Endothelial cell of umbilical vein (primary cell): ENCODE measurements at regions of chrX and their contacts with region 1.

Region 1: GRCh38 chrX:15564981-15565579 is 35.7 kb downstream of the ACE2 start:
- DNase-seq: peak; percentile 87
- H3K4me3 ChIP-seq: no peak overlapping the region
- H3K27ac ChIP-seq: peak overlapping the region; percentile 32
- H3K4me1 ChIP-seq: peaks cover 24% of the 10 kb centered on the region
- H3K27me3 ChIP-seq: no peaks in the 10 kb centered on the region
- CTCF ChIP-seq: peak; percentile 51 to 53
- POLR2A ChIP-seq: no peak

Region 2: DNA sequence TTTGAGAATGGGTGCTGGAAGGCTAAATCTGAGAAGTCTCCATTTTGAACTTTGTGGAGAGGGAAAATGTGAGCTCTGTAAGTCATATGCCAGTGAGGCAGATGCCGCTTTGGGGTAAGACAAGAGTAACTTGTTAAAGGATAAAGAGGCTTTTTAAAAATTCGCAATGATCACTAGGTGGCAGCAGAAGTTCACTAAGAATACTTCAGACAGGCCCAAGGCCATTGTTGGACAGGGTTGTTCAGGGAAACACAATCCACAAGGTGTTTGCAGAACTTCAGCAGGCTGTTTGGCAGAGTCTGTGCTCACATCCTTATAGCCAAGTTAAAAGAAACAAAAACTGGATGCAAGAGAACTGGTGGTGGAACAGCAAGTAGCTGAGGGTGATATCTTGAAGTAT is 216.0 kb before region 1 on chrX:
- CTCF ChIA-PET with region 1: interaction called, 8 read pairs
- POLR2A ChIA-PET with region 1: no interaction called
- dilution Hi-C with region 1: no loop called
- intact Hi-C with region 1: loop called (anchors 1 kb)
- DNase-seq: peak; percentile 64
- H3K4me3 ChIP-seq: no peak overlapping the region
- H3K27ac ChIP-seq: no peak overlapping the region
- H3K4me1 ChIP-seq: no peaks in the 10 kb centered on the region
- H3K27me3 ChIP-seq: no peaks in the 10 kb centered on the region
- CTCF ChIP-seq: peak; percentile 15 to 38
- POLR2A ChIP-seq: no peak

Region 3: GRCh38 chrX:15524417-15524816 is 40.7 kb before region 1 on chrX:
- CTCF ChIA-PET with region 1: interaction called, 4 read pairs
- POLR2A ChIA-PET with region 1: no interaction called
- dilution Hi-C with region 1: no loop called
- intact Hi-C with region 1: loop called (anchors 2 kb)
- DNase-seq: peak; percentile 81
- H3K4me3 ChIP-seq: no peak overlapping the region
- H3K27ac ChIP-seq: peak overlapping the region; percentile 73
- H3K4me1 ChIP-seq: peaks cover 74% of the 10 kb centered on the region
- H3K27me3 ChIP-seq: no peaks in the 10 kb centered on the region
- CTCF ChIP-seq: no peak
- POLR2A ChIP-seq: no peak

Region 4: DNA sequence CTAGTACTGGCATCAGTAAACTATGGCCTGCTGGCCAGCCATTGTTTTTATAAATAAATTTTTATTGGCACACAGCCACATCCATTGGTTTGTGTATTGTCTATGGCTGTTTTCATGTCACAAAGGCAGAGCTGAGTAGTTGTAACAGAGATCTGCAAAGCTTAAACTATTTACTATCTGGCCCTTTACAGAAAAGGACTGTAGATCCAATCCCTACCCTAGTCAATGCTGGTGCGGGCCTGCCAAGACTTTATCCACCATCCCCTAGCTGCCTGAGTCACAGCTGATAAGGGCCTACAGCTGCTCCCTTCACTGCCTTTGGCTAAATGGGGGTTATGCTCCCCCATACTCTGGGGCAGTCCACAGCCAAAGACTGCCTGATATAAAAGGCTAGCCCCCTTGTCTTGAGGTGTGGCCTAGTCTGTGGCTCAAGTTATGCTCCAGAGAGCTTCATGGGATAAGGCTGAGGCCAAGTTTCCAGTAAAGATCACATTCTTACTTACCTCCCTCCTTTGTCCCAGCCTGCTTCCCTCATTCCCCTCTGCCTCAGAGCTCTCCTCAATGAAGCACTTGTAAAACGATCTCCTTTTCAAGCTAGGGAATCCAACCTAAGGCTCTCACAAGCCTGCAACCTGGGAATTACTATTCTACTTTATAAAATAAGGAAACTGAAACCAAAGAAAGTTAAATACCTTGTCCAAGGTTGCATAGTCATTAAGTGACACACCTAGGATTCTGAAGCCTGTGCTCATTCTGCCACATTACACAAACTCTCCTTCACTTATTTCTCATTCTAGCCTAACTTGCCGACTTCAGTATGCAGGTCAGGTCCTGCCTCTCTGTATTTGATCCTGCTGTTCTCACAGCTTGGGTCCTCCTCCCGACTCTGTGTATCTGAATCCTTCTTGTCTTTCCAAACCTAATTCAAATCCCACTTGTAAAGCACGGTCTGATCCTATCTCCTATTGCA is 15.0 kb after region 1 on chrX:
- CTCF ChIA-PET with region 1: interaction called, 12 read pairs
- POLR2A ChIA-PET with region 1: no interaction called
- dilution Hi-C with region 1: no loop called
- intact Hi-C with region 1: no loop called
- DNase-seq: peak; percentile 80
- H3K4me3 ChIP-seq: no peak overlapping the region
- H3K27ac ChIP-seq: no peak overlapping the region
- H3K4me1 ChIP-seq: peaks cover 9% of the 10 kb centered on the region
- H3K27me3 ChIP-seq: no peaks in the 10 kb centered on the region
- CTCF ChIP-seq: no peak
- POLR2A ChIP-seq: no peak